Panc1 (cell line): ENCODE measurements at regions of chr3 and their contacts with region 1.

Region 1: GRCh38 chr3:129106331-129106730 is 15.3 kb downstream of the RAB43 start:
- DNase-seq: no peak
- ATAC-seq: peak; percentile 62
- H3K4me3 ChIP-seq: no peak overlapping the region
- H3K27ac ChIP-seq: no peak overlapping the region
- H3K4me1 ChIP-seq: no peaks in the 10 kb centered on the region
- H3K27me3 ChIP-seq: no peaks in the 10 kb centered on the region
- CTCF ChIP-seq: no peak

Region 2: DNA sequence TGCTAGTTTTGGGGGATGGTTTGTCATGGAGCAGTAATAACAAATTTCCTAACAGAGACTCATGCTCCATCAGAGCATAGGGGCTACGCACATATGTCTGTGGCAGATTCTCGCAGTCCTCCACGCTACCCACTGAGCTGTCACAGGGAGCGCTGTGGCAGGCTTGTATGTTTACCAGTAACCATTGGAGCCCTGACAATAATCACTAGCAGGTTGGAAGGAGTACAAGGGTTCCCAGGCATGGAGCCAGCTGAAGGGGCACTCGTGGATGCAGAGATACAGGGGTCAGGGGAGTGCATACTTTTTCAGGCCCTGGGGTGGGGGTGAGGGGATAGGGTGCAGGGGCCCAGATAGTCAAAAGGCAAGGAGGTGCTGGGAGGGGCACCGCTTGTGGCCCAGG is 53.7 kb before region 1 on chr3:
- CTCF ChIA-PET with region 1: interaction called, 10 read pairs
- POLR2A ChIA-PET with region 1: interaction called, 7 read pairs
- in situ Hi-C with region 1: no loop called
- intact Hi-C with region 1: no loop called
- DNase-seq: no peak
- ATAC-seq: no peak
- H3K4me3 ChIP-seq: no peak overlapping the region
- H3K27ac ChIP-seq: no peak overlapping the region
- H3K4me1 ChIP-seq: peaks cover 33% of the 10 kb centered on the region
- H3K27me3 ChIP-seq: no peaks in the 10 kb centered on the region
- CTCF ChIP-seq: no peak